ENCODE measurements at regions of chr5 and their contacts with region 1.

Region 1: DNA sequence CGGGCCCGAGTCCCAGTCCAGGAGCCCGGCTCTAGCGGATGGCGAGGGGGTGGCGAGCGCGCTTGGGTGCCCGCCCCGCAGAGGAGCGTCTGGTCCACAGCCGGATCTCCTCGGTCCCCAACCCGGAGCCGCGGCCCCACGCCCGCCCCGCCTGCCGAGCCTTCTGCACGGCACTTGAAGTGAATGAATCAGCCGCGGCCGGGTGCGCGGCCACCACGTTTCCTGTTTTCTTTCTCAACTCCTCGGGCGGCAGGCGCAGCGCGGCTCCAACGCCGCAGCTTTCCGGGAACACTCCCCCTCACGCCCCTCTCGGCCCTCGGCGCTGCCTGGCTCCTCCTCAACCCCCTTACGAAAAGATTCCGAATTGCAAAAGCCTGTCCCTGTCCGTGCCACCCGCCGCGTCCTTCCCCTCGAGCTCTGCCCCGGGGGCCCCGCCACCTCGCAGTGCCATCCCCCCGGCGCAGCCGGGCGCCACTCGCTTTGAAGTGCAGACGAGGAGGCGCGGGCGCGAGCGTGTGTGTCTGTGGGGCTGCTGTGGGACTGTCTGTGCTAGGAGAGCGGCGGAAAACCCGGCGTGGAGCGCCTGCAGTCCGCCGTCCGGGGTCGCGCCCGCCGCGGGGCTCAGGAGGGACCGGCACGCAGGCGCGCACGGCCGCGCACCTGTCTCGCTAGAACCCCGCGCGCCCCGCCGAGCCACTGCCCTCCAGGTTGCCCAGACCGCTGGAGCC is 456.6 kb downstream of the RAB3C start:
- DNase-seq: peak; percentile 81 to 94 (median 93)
- ATAC-seq: peak; percentile 87
- H3K4me3 ChIP-seq: peak overlapping the region; percentile 51
- H3K4me3 Mint-ChIP-seq: peak overlapping the region; percentile 83 to 98 (median 96)
- H3K27ac ChIP-seq: peak overlapping the region; percentile 86
- H3K27ac Mint-ChIP-seq: peak overlapping the region; percentile 97 to 100 (median 99)
- H3K4me1 ChIP-seq: peaks cover 16 to 33% of the 10 kb centered on the region in 2 donors
- H3K4me1 Mint-ChIP-seq: peaks cover 30 to 62% (median 56%) of the 10 kb centered on the region in 7 donors
- H3K27me3 ChIP-seq: no peaks in the 10 kb centered on the region
- H3K27me3 Mint-ChIP-seq: no peaks in the 10 kb centered on the region

Region 2: GRCh38 chr5:57736716-57737115 is 1302.7 kb before region 1 on chr5:
- CTCF ChIA-PET with region 1: no interaction called
- POLR2A ChIA-PET with region 1: no interaction called
- intact Hi-C with region 1: no loop called
- DNase-seq: no peak
- ATAC-seq: no peak
- H3K4me3 ChIP-seq: no peak overlapping the region
- H3K4me3 Mint-ChIP-seq: no peak overlapping the region
- H3K27ac ChIP-seq: no peak overlapping the region
- H3K27ac Mint-ChIP-seq: no peak overlapping the region
- H3K4me1 ChIP-seq: no peaks in the 10 kb centered on the region
- H3K4me1 Mint-ChIP-seq: peaks cover 0 to 2% (median 0%) of the 10 kb centered on the region in 7 donors
- H3K27me3 ChIP-seq: no peaks in the 10 kb centered on the region
- H3K27me3 Mint-ChIP-seq: peaks cover 0 to 23% (median 0%) of the 10 kb centered on the region in 5 donors

Region 3: DNA sequence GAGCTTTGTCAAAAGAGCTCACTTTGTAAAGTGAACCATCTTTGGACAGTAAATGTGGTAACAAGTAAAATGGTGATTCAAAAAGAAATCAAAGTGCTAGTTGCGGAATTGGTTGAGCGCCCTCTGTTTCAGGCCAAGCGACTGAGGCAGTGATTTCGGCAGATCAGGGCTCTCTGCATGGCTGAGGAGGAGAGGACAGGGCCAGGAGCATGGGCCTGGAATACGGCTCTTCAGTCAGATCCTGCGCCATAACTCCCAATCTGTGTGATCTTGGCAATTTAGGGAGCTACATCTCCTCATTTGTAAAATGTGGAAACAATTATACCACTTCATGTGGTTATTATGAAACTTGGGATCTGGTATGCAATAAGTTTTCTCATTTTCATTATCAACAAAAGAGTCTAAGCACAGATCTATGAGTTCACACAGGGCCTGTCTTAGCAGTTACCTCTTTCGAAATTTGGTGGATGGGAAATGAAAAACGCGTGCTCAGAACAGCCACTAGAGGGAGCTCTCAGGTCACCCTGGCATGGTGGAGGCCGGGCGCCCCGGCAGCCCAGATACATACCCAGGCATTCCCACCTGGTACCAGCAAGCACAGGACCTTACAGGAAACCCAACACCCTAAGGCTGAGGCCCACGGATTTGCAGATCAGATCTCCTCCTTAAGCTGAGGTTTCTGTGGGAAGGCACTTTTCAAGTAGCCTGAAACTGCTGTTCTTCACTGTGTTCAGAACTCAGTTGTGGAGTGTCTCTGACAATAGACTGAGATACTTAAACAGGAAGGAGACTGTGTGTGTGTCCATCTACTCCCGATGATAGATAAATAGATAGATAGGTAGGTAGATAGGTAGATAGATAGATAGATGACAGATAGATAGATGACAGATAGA is 152.9 kb before region 1 on chr5:
- CTCF ChIA-PET with region 1: interaction called, 6 read pairs
- POLR2A ChIA-PET with region 1: no interaction called
- intact Hi-C with region 1: loop called (anchors 1 to 2 kb)
- DNase-seq: peak; percentile 41 to 77 (median 66)
- ATAC-seq: peak; percentile 91
- H3K4me3 ChIP-seq: no peak overlapping the region
- H3K4me3 Mint-ChIP-seq: peak overlapping the region in 7 of 10 donors; percentile 0 to 67 (median 38)
- H3K27ac ChIP-seq: no peak overlapping the region
- H3K27ac Mint-ChIP-seq: peak overlapping the region in 8 of 9 donors; percentile 13 to 85 (median 49)
- H3K4me1 ChIP-seq: peaks cover 0 to 10% of the 10 kb centered on the region in 2 donors
- H3K4me1 Mint-ChIP-seq: peaks cover 19 to 38% (median 27%) of the 10 kb centered on the region in 7 donors
- H3K27me3 ChIP-seq: no peaks in the 10 kb centered on the region
- H3K27me3 Mint-ChIP-seq: peaks cover 0 to 12% (median 0%) of the 10 kb centered on the region in 5 donors

Region 4: DNA sequence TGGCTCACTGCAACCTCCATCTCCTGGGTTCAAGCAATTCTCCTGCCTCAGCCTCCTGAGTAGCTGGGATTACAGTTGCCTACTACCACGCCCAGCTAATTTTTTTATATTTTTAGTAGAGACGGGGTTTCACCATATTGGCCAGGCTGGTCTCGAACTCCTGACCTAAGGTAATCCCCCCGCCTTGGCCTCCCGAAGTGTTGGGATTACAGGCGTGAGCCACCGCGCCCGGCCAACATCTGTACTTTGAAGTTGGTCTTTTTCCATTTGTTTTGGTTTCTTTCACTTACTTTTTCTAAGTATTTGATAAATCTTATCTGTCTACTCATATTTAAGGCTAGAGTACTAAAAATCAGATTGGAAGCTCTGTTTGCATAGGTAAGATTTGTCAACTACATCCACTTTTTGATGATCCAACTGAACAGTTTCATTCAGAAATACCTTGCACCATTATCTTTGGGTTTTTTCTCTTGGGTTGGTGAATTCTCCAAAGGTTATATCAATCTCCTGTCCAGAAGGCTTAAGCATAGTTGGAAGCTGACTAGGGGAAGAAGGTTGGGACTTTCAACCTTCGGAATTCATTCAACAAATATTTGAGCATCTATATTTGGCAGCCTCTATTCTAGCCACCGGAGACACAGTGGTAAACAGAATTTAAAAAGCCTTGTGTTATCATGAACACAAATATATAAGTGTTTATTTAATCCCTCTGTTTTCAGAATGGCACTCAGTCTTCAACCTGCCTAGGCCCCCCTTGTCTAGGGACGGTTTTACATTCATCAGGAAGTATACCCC is 32.5 kb after region 1 on chr5:
- CTCF ChIA-PET with region 1: no interaction called
- POLR2A ChIA-PET with region 1: no interaction called
- intact Hi-C with region 1: loop called in 1 of 2 experiments (anchors 2 kb)
- DNase-seq: no peak
- ATAC-seq: no peak
- H3K4me3 ChIP-seq: no peak overlapping the region
- H3K4me3 Mint-ChIP-seq: no peak overlapping the region
- H3K27ac ChIP-seq: no peak overlapping the region
- H3K27ac Mint-ChIP-seq: no peak overlapping the region
- H3K4me1 ChIP-seq: no peaks in the 10 kb centered on the region
- H3K4me1 Mint-ChIP-seq: peaks cover 0 to 4% (median 0%) of the 10 kb centered on the region in 7 donors
- H3K27me3 ChIP-seq: no peaks in the 10 kb centered on the region
- H3K27me3 Mint-ChIP-seq: peaks cover 0 to 12% (median 0%) of the 10 kb centered on the region in 5 donors

Region 5: GRCh38 chr5:59099270-59099994 is 60.0 kb after region 1 on chr5:
- CTCF ChIA-PET with region 1: no interaction called
- POLR2A ChIA-PET with region 1: interaction called, 5 read pairs
- intact Hi-C with region 1: loop called in 1 of 2 experiments (anchors 1 kb)
- DNase-seq: peak in 2 of 9 donors; percentile 2 to 39
- ATAC-seq: peak; percentile 90
- H3K4me3 ChIP-seq: no peak overlapping the region
- H3K4me3 Mint-ChIP-seq: peak overlapping the region in 4 of 10 donors; percentile 1 to 66 (median 4)
- H3K27ac ChIP-seq: no peak overlapping the region
- H3K27ac Mint-ChIP-seq: peak overlapping the region in 8 of 9 donors; percentile 0 to 87 (median 22)
- H3K4me1 ChIP-seq: peaks cover 10 to 14% of the 10 kb centered on the region in 2 donors
- H3K4me1 Mint-ChIP-seq: peaks cover 11 to 80% (median 22%) of the 10 kb centered on the region in 7 donors
- H3K27me3 ChIP-seq: no peaks in the 10 kb centered on the region
- H3K27me3 Mint-ChIP-seq: no peaks in the 10 kb centered on the region

Region 6: GRCh38 chr5:59133682-59134261 is 94.3 kb after region 1 on chr5:
- CTCF ChIA-PET with region 1: interaction called, 30 read pairs
- POLR2A ChIA-PET with region 1: interaction called, 47 read pairs
- intact Hi-C with region 1: no loop called
- DNase-seq: no peak
- ATAC-seq: no peak
- H3K4me3 ChIP-seq: no peak overlapping the region
- H3K4me3 Mint-ChIP-seq: no peak overlapping the region
- H3K27ac ChIP-seq: no peak overlapping the region
- H3K27ac Mint-ChIP-seq: peak overlapping the region in 2 of 9 donors; percentile 5 to 54
- H3K4me1 ChIP-seq: peaks cover 3 to 5% of the 10 kb centered on the region in 2 donors
- H3K4me1 Mint-ChIP-seq: peaks cover 0 to 45% (median 23%) of the 10 kb centered on the region in 7 donors
- H3K27me3 ChIP-seq: no peaks in the 10 kb centered on the region
- H3K27me3 Mint-ChIP-seq: no peaks in the 10 kb centered on the region

Region 7: GRCh38 chr5:59174248-59174844 is 134.9 kb after region 1 on chr5:
- CTCF ChIA-PET with region 1: interaction called, 121 read pairs
- POLR2A ChIA-PET with region 1: interaction called, 11 read pairs
- intact Hi-C with region 1: loop called (anchors 1 kb)
- DNase-seq: peak in 7 of 9 donors; percentile 35 to 67 (median 54)
- ATAC-seq: peak; percentile 86
- H3K4me3 ChIP-seq: no peak overlapping the region
- H3K4me3 Mint-ChIP-seq: no peak overlapping the region
- H3K27ac ChIP-seq: no peak overlapping the region
- H3K27ac Mint-ChIP-seq: peak overlapping the region in 1 of 9 donors; percentile 5
- H3K4me1 ChIP-seq: no peaks in the 10 kb centered on the region
- H3K4me1 Mint-ChIP-seq: peaks cover 0 to 48% (median 5%) of the 10 kb centered on the region in 7 donors
- H3K27me3 ChIP-seq: no peaks in the 10 kb centered on the region
- H3K27me3 Mint-ChIP-seq: no peaks in the 10 kb centered on the region

Region 8: DNA sequence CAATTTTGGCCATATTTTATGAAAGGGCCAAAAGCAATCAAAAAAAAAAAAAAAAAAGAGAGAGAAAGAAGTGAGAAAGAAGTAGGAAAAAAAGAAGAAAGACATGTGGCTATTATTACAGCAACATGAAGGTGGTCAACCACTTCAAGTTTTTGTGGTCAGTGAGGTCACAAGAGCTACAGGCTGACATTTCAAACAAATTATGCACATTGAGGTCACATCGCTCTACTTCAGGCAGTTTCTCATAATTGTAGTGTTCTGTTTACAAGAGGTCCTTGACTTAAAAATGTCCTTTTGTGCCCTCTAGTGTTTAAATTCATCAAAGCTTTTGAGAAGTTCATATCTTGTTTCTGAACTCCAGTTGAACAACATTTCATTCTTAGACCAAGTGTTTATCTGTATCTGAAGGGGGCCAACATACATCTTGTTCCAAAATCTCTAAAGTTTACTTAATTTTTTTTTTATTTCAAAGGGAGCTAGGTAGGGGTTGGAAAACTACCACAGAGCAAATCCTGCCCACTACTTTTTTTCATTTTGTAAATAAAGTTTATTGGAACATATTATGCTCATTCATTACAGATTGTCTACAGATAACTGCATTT is 341.0 kb after region 1 on chr5:
- CTCF ChIA-PET with region 1: no interaction called
- POLR2A ChIA-PET with region 1: no interaction called
- intact Hi-C with region 1: loop called in 1 of 2 experiments (anchors 5 kb)
- DNase-seq: peak in 6 of 9 donors; percentile 2 to 50 (median 36)
- ATAC-seq: peak; percentile 85
- H3K4me3 ChIP-seq: no peak overlapping the region
- H3K4me3 Mint-ChIP-seq: peak overlapping the region in 1 of 10 donors; percentile 35
- H3K27ac ChIP-seq: no peak overlapping the region
- H3K27ac Mint-ChIP-seq: no peak overlapping the region
- H3K4me1 ChIP-seq: no peaks in the 10 kb centered on the region
- H3K4me1 Mint-ChIP-seq: no peaks in the 10 kb centered on the region
- H3K27me3 ChIP-seq: no peaks in the 10 kb centered on the region
- H3K27me3 Mint-ChIP-seq: peaks cover 0 to 19% (median 0%) of the 10 kb centered on the region in 5 donors

Region 9: DNA sequence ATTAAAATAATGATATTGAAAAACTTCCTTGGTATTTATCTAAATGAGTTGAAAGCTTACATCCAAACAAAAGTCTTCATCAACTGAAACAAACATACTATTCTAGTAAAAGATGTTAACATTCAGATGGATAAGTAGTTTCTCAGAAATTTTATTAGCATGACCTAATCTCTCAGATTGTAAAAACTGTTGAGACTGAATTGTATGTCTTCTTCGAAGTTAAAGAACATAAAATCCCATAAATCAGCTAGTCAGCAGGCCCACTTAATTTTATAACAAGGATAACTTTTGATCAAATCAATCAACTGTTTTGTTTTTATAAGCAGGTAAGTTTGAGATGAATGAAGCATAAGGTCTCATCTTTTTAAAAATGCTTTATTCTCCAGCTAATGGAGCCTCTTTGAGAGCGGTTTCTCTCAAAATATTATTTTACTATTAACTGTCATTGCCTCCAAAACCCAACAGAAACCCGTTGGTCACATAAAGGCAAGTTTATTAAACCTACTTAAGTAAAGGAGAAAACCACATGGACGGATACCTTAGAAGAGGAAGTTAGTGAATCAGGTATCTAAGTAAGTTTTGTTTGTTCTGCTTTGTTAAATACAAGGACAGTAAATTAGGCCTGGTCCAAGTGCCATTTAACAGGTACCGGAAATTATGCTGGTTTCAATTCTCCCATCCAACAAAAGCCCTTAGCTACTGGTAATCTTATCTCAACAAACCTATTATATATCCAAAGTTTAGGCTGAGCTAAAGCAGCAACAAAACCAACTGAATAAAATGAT is 397.1 kb after region 1 on chr5:
- CTCF ChIA-PET with region 1: no interaction called
- POLR2A ChIA-PET with region 1: no interaction called
- intact Hi-C with region 1: no loop called
- DNase-seq: no peak
- ATAC-seq: no peak
- H3K4me3 ChIP-seq: no peak overlapping the region
- H3K4me3 Mint-ChIP-seq: no peak overlapping the region
- H3K27ac ChIP-seq: no peak overlapping the region
- H3K27ac Mint-ChIP-seq: no peak overlapping the region
- H3K4me1 ChIP-seq: no peaks in the 10 kb centered on the region
- H3K4me1 Mint-ChIP-seq: no peaks in the 10 kb centered on the region
- H3K27me3 ChIP-seq: no peaks in the 10 kb centered on the region
- H3K27me3 Mint-ChIP-seq: peaks cover 0 to 17% (median 11%) of the 10 kb centered on the region in 5 donors

Measured in naive thymus-derived CD4-positive, alpha-beta T cell (primary cell).